AG04449 (cell line): ENCODE measurements at regions of chr10 and their contacts with region 1.

Region 1: DNA sequence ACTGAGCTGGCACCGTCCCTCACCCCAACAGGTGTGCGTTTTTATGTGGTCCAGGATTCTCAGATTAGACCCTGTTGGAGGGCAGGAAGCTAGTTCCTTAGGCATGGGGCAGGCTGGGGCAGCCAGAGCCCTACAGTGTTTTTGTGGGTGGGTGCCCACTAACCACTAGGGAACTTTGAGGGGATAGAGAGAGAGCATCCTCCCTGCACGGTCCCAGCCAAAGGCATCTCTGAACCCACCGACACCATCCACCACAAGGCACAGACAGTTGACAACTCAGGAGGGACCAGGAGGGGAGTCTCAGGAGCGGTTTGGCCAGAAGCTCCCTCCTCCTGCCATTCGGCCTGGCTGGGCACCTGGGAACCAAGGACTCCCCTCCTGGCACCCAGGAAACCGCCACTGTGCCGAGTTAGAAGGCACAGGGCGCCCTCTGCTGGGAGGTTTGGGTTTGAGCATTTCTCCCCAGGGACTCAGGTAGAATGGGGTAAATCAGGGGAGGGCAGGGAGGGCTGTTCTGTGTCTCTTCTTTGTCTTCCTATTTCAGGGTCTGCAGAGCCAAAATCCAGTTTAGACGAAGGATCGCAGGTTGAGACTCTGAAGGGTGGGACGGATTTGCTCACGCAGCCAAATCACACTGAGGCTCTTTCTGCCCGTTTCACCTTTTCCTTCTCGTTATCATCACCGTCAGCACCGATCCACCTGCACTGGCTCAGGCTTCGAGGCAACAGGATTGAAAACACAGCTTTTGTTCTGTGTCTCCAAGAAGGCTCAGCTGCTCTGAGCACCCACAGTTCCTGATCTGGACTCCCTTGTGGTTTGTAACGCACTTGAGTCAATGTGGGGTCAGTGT is 84.8 kb upstream of the COL13A1 start:
- DNase-seq: no peak
- H3K4me3 ChIP-seq: no peak overlapping the region
- CTCF ChIP-seq: peak; percentile 72

Region 2: DNA sequence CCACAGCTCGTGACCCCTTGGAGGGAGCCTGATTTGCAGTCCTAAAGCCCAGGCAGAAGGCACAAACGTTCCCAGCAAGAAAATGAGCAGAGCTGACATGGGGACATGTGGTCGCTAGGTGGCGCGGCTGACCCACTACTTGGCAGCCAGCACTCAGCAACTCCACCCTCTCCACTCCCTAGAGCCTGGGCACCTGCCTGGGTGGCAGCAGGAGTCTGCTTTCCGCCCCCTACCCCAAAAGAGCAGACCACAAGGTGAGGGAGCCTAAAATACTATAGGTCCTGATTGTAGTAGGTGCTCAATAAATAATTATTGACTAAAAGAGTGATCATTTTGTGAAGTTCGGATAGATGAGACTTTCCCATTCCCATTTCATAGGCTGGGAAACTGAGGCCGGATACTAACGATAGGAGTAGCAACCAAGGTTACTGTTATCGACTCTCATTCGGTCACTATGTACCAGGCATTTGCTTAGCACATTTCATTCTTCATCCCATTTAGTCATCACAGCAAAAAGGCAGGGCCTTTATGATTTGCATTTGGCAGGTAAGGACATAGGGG is 201.2 kb before region 1 on chr10:
- CTCF ChIA-PET with region 1: interaction called, 14 read pairs
- POLR2A ChIA-PET with region 1: no interaction called
- DNase-seq: no peak
- H3K4me3 ChIP-seq: no peak overlapping the region
- CTCF ChIP-seq: peak; percentile 95

Region 3: DNA sequence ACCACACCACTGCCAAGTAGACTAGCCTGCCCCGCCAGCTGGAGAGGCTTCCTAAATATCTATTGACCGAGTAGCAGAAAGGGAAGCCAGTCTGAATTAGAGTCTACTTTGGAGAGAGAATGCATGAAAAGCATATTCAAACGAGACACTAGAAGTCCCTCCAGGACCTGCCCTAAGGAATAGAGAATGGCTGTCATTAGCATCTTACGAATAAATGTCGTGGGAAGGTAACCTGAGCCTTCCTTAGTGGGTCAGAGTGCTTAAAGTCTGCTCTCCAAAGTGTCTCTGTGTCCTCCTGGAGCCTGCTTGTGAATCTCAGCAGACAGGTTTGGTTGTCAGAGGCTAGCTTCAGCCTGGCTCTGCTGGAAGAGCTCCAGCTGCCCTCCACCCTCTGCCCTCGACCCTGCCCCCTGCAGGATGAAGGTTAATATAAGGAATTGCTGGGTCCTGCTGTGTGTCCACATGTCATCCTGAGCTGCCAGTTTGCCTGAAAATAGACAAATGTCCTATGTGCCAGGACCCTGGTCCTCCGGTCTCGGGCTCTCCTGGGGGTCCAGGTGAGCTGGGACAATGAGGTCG is 53.5 kb before region 1 on chr10:
- CTCF ChIA-PET with region 1: interaction called, 23 read pairs
- POLR2A ChIA-PET with region 1: no interaction called
- DNase-seq: no peak
- H3K4me3 ChIP-seq: no peak overlapping the region
- CTCF ChIP-seq: no peak

Region 4: DNA sequence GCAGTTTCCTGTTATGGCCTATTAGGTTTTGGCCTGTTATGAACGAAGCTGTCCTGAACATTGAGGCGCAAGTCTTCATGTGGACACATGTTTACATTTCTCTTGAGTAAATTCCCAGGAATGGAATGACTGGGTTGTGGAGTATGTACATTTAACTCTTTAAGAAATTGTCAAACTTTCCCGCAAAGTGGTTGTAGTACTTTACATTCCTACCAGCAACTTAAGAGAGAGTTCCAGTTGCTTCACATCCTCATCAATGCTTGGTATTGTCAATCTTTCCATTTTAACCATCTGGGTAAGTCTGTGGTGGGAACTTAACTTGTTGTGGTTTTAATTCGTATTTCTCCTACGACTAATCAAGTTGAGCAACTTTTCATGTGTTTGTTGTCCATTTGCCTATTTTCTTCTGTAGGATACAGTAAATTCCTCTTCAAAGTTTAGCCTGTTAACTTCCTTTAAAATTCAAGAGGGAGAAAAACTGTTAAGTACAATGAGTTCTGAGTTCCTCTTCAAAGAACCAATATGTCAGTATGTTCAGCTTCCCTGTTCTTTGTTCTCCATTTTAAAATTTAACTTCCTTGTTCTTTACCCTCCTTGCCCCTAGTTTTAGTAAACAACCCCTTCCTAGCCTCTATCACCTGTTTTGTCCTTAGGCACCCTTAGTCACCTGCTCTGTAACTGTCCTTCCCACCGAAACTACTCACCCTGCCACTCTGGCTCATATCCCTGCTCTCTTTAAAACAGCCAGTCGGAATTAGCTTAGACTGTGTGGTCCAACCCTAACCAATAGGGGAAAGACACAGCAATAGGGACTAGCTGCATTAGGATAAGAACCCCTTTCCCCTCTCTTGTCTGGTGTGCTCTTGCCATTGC is 12.9 kb before region 1 on chr10:
- CTCF ChIA-PET with region 1: interaction called, 60 read pairs
- POLR2A ChIA-PET with region 1: no interaction called
- DNase-seq: peak; percentile 73
- H3K4me3 ChIP-seq: no peak overlapping the region
- CTCF ChIP-seq: no peak